ENCODE measurements at regions of chr17 and their contacts with region 1.

Region 1: GRCh38 chr17:1331708-1332107 is 52.2 kb downstream of the TRARG1 start:
- H3K4me3 ChIP-seq: no peak overlapping the region
- H3K27ac ChIP-seq: no peak overlapping the region
- H3K4me1 ChIP-seq: no peaks in the 10 kb centered on the region
- CTCF ChIP-seq: no peak

Region 2: GRCh38 chr17:1267471-1267947 is 64.2 kb before region 1 on chr17:
- CTCF ChIA-PET with region 1: interaction called, 23 read pairs
- POLR2A ChIA-PET with region 1: interaction called, 3 read pairs
- H3K4me3 ChIP-seq: peak overlapping the region; percentile 77
- H3K27ac ChIP-seq: peak overlapping the region; percentile 84; the same call in 1 of the 2 replicates
- H3K4me1 ChIP-seq: no peaks in the 10 kb centered on the region
- CTCF ChIP-seq: no peak

Region 3: DNA sequence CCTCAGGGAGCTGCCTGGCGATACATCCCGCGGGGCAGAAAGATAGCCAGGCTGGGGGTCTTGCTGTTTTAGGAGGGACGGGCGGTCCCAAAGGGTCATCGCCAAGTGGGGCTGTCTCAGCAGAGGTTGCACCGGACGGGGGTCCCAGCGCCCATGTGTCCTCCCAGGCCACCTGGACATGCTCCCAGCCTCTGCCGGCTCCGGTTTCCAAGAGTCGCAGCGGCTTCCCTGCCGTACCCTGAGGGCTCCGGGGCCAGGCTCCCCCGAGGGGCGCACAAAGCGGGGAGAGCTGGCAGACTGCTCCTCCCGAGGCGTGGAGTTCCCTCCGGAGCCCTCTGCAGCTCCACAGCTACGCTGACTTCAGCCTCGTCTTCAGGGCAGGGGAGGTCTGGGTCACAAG is 51.1 kb before region 1 on chr17:
- CTCF ChIA-PET with region 1: interaction called, 40 read pairs
- POLR2A ChIA-PET with region 1: no interaction called
- H3K4me3 ChIP-seq: no peak overlapping the region
- H3K27ac ChIP-seq: no peak overlapping the region
- H3K4me1 ChIP-seq: no peaks in the 10 kb centered on the region
- CTCF ChIP-seq: no peak

Region 4: DNA sequence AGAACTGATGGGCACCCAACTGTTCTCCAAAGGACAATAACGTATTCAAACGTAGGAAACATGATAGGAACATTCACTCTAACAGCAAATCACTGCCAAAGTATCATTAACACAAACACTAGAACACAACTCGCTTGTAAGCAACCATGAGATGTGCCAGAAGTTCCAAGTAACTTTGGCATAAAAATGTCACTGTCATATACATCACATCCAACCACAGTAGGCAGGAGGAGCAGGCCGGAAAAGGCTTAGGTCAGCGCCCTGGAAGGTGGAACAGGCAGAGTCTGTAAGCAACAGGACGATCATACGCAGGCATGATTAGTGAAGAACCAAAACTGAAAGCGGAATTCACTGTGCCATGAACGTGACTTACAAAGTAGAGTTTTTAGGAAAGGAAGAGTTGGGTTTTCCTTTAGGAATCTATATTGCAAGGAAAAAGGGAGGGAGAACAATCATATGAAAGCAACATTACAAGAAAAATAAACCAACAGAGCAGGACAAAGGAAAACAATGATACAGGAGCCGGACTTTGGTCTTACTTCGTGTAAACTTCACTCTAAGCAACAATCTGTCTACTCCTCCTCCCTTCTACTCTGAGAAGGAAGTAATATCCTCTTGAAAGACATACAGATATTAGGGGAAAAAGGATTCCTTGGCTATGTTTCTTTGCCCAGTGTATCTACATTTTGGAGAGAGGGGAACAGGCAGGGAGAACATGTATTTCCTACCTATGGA is 16.0 kb after region 1 on chr17:
- CTCF ChIA-PET with region 1: interaction called, 18 read pairs
- POLR2A ChIA-PET with region 1: interaction called, 4 read pairs
- H3K4me3 ChIP-seq: no peak overlapping the region
- H3K27ac ChIP-seq: peak overlapping the region; percentile 25; the same call in 1 of the 2 replicates
- H3K4me1 ChIP-seq: peaks cover 10% of the 10 kb centered on the region
- CTCF ChIP-seq: no peak

Region 5: GRCh38 chr17:1467898-1468492 is 136.3 kb after region 1 on chr17:
- CTCF ChIA-PET with region 1: no interaction called
- POLR2A ChIA-PET with region 1: no interaction called
- H3K4me3 ChIP-seq: no peak overlapping the region
- H3K27ac ChIP-seq: no peak overlapping the region; the same call in 1 of the 2 replicates
- H3K4me1 ChIP-seq: no peaks in the 10 kb centered on the region
- CTCF ChIP-seq: no peak

Measured in HEK293 (cell line).